Endothelial cell of umbilical vein (primary cell): ENCODE measurements at regions of chr3 and their contacts with region 1.

Region 1: GRCh38 chr3:173411375-173411973 is 13.9 kb downstream of the NLGN1 start:
- DNase-seq: peak; percentile 80
- H3K4me3 ChIP-seq: no peak overlapping the region
- H3K27ac ChIP-seq: no peak overlapping the region
- H3K4me1 ChIP-seq: no peaks in the 10 kb centered on the region
- H3K27me3 ChIP-seq: no peaks in the 10 kb centered on the region
- CTCF ChIP-seq: peak; percentile 21 to 35
- POLR2A ChIP-seq: no peak

Region 2: GRCh38 chr3:172958565-172958964 is 452.9 kb before region 1 on chr3:
- CTCF ChIA-PET with region 1: no interaction called
- POLR2A ChIA-PET with region 1: no interaction called
- dilution Hi-C with region 1: no loop called
- intact Hi-C with region 1: no loop called
- DNase-seq: no peak
- H3K4me3 ChIP-seq: no peak overlapping the region
- H3K27ac ChIP-seq: no peak overlapping the region
- H3K4me1 ChIP-seq: no peaks in the 10 kb centered on the region
- H3K27me3 ChIP-seq: no peaks in the 10 kb centered on the region
- CTCF ChIP-seq: no peak
- POLR2A ChIP-seq: no peak

Region 3: DNA sequence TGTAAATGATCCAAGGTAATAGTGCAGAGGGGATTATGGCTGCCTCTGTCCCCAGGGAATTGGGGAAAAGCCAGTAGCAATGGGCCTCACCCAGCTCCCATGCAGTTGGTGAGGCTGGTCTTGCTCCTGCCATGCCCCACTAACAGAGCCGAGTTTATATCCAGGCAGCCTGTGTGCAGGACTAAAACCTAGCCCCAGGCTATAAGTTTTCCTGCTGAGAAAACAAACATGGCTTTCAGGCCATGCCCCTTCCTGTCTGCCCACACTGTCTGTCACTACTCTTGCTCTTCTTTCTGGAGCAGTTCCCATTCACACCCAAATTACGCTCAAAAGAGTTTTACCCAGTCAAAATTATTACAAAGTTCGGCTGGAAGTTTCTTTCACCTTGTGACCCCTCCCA is 196.9 kb before region 1 on chr3:
- CTCF ChIA-PET with region 1: no interaction called
- POLR2A ChIA-PET with region 1: no interaction called
- dilution Hi-C with region 1: no loop called
- intact Hi-C with region 1: no loop called
- DNase-seq: no peak
- H3K4me3 ChIP-seq: no peak overlapping the region
- H3K27ac ChIP-seq: no peak overlapping the region
- H3K4me1 ChIP-seq: no peaks in the 10 kb centered on the region
- H3K27me3 ChIP-seq: peaks cover 4 to 5% of the 10 kb centered on the region in 2 experiments
- CTCF ChIP-seq: no peak
- POLR2A ChIP-seq: no peak

Region 4: DNA sequence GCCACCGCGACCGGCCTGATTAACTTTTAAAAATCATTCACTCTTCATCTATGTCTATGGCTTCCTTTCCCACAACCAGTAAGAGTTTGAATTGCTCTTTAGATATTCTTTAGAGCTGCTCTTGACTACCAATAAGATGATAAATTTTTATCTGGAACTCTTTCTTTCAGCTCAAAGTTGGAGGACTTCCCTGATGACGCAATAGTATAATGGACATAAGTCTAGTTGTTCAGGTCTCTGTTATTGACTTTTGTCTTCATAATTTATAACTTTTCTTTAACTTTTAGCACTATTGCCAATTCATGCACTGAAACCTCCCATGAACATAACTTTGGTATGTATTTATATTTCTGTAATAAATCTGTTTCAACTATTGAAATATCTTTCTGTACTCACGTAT is 75.2 kb before region 1 on chr3:
- CTCF ChIA-PET with region 1: no interaction called
- POLR2A ChIA-PET with region 1: no interaction called
- dilution Hi-C with region 1: no loop called
- intact Hi-C with region 1: no loop called
- DNase-seq: no peak
- H3K4me3 ChIP-seq: no peak overlapping the region
- H3K27ac ChIP-seq: no peak overlapping the region
- H3K4me1 ChIP-seq: no peaks in the 10 kb centered on the region
- H3K27me3 ChIP-seq: peaks cover 0 to 5% of the 10 kb centered on the region in 2 experiments
- CTCF ChIP-seq: no peak
- POLR2A ChIP-seq: no peak

Region 5: DNA sequence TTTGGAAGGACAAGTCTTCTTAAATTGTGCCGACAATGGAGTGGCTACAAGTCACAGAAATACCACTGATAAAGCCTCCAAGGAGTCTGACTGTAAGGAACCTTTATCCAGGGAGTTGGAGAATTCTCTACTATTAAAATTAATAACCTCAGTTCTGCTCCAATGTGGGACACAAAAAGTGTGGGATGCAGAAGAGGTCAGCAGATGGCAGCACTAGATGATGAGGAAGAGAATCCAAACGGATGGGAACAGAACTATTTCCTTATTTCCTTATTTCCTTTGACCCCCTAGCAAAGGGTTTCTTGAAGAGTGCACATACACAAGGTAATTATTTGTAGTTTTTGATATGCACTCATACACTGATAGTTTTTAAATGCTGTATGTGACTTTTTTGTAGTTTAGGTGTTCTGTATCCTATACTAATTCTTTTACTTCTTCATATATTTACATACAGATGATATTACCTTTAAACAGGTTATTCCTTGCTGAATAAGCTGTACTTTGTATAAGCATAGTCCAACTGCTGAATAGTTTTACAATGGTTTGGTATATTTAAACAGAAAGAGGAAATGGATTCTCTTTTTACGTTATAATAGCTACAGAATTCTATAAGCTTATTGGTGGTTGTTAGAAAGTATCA is 39.5 kb before region 1 on chr3:
- CTCF ChIA-PET with region 1: interaction called, 12 read pairs
- POLR2A ChIA-PET with region 1: no interaction called
- dilution Hi-C with region 1: no loop called
- intact Hi-C with region 1: no loop called
- DNase-seq: peak; percentile 50
- H3K4me3 ChIP-seq: no peak overlapping the region
- H3K27ac ChIP-seq: no peak overlapping the region
- H3K4me1 ChIP-seq: no peaks in the 10 kb centered on the region
- H3K27me3 ChIP-seq: no peaks in the 10 kb centered on the region
- CTCF ChIP-seq: peak; percentile 56 to 57
- POLR2A ChIP-seq: no peak

Region 6: DNA sequence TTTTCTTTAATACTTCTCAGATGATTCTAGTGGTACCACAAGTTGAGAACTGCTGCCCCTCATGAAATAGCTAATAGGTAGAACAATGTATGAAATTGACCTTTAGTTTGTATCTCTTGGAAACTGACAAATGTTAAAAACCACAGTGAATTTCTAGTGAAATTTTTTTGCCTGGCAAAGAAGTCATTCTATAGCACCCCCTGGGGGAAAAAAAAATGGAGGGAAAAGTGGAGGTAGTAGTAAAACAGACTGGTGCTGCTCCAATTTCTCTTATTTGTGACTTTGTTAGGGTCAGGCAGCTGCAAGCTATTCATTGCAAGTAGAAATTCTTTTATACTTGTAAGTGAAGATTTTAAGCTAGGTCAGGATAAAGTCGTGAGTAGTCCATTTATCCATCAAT is 591.1 kb after region 1 on chr3:
- CTCF ChIA-PET with region 1: no interaction called
- POLR2A ChIA-PET with region 1: no interaction called
- dilution Hi-C with region 1: no loop called
- intact Hi-C with region 1: loop called (anchors 1 kb)
- DNase-seq: peak; percentile 26
- H3K4me3 ChIP-seq: no peak overlapping the region
- H3K27ac ChIP-seq: no peak overlapping the region
- H3K4me1 ChIP-seq: no peaks in the 10 kb centered on the region
- H3K27me3 ChIP-seq: no peaks in the 10 kb centered on the region
- CTCF ChIP-seq: peak; percentile 11 to 29
- POLR2A ChIP-seq: no peak